Dendritic cell treated with granulocyte-macrophage colony-stimulating factor and Interleukin-4, amounts not matched to agents 40 ng/mL and 50 ng/mL, for 4 days (primary cell): ENCODE measurements at regions of chr20 and their contacts with region 1.

Region 1: DNA sequence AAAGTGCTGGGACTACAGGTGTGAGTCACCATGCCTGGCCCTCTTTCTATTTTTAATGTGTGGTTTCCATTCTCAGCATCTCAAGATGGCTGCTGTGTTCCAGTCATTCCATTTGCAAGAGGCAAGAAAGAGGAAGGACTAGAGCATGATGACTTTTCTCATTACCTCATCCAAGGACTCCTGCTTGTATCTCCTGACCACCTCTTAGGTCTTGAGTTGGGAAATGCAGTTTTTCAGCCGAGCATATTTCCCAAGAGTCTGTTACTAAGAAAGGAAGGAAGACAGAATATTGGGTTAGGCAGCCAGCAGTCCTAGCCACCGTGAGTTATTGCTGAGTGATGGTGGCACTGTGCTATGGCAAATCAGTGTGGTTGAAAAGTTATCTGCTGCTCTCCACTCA is 108.4 kb upstream of the INSM1 start:
- H3K4me3 Mint-ChIP-seq: no peak overlapping the region
- H3K27ac Mint-ChIP-seq: peak overlapping the region; percentile 81
- H3K4me1 Mint-ChIP-seq: peaks cover 45% of the 10 kb centered on the region
- H3K27me3 Mint-ChIP-seq: no peaks in the 10 kb centered on the region

Region 2: GRCh38 chr20:20304942-20305341 is 45.4 kb after region 1 on chr20:
- intact Hi-C with region 1: loop called (anchors 5 kb)
- H3K4me3 Mint-ChIP-seq: peak overlapping the region; percentile 21
- H3K27ac Mint-ChIP-seq: peak overlapping the region; percentile 84
- H3K4me1 Mint-ChIP-seq: peaks cover 31% of the 10 kb centered on the region
- H3K27me3 Mint-ChIP-seq: peaks cover 3% of the 10 kb centered on the region

Region 3: DNA sequence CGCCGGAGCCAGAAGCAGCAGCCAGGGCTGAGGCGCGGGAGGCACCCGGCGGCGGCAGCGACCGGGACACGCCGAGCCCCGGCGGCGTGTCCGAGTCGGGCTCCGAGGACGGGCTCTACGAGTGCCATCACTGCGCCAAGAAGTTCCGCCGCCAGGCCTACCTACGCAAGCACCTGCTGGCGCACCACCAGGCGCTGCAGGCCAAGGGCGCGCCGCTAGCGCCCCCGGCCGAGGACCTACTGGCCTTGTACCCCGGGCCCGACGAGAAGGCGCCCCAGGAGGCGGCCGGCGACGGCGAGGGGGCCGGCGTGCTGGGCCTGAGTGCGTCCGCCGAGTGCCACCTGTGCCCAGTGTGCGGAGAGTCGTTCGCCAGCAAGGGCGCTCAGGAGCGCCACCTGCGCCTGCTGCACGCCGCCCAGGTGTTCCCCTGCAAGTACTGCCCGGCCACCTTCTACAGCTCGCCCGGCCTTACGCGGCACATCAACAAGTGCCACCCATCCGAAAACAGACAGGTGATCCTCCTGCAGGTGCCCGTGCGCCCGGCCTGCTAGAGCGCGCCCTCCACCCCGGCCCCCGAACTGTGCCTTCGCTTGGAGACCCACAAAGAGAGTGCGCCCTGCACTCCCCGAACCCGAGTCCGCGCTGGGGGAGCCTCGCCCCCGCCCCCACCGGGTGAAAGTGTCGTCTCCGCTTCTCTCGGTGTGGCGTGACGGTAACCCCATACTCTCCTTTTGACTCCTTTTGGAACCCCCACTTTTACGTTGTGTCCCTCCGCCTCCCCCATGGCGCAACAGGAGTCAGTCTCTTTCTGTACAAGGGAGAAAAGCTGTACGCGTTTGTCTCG is 109.9 kb after region 1 on chr20:
- intact Hi-C with region 1: no loop called
- H3K4me3 Mint-ChIP-seq: peak overlapping the region; percentile 4
- H3K27ac Mint-ChIP-seq: no peak overlapping the region
- H3K4me1 Mint-ChIP-seq: peaks cover 20% of the 10 kb centered on the region
- H3K27me3 Mint-ChIP-seq: peaks cover 84% of the 10 kb centered on the region